HEK293 (cell line): ENCODE measurements at regions of chr6 and their contacts with region 1.

Region 1: GRCh38 chr6:135145063-135145800 is 35.9 kb upstream of the MYB start:
- H3K4me3 ChIP-seq: no peak overlapping the region
- H3K27ac ChIP-seq: no peak overlapping the region
- H3K4me1 ChIP-seq: no peaks in the 10 kb centered on the region
- CTCF ChIP-seq: no peak

Region 2: DNA sequence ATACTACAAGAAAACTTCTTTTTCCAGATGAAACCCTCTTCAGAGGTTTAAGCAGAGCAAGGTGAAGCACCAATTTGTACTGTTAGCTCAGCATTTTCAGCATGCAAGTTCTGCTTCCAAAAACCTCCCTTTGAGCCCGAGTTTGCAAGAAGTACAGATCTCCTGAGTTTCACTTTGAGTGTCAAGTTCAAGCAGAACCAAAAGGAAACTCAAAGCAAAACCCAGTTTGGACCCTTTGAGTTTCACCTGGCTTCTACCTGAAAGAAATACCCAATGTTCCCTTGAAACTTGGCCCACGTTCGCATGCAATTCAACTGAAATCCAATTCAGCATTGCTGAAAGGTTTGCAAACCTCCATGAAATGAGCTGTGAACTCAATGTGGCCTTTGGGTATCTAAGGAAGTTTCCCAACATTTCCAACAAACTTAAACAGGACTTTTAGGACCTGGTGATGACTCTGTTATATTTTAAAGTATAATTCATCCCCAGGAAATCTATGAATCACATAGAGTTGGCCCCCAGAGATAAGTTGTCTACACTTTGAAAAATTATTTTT is 27.7 kb before region 1 on chr6:
- CTCF ChIA-PET with region 1: interaction called, 10 read pairs
- POLR2A ChIA-PET with region 1: no interaction called
- H3K4me3 ChIP-seq: no peak overlapping the region
- H3K27ac ChIP-seq: no peak overlapping the region
- H3K4me1 ChIP-seq: no peaks in the 10 kb centered on the region
- CTCF ChIP-seq: no peak

Region 3: GRCh38 chr6:135162678-135163439 is 17.6 kb after region 1 on chr6:
- CTCF ChIA-PET with region 1: interaction called, 19 read pairs
- POLR2A ChIA-PET with region 1: no interaction called
- H3K4me3 ChIP-seq: no peak overlapping the region
- H3K27ac ChIP-seq: no peak overlapping the region
- H3K4me1 ChIP-seq: no peaks in the 10 kb centered on the region
- CTCF ChIP-seq: 0 out of 2 replicates have a peak, but pooled peaks have one; percentile 16

Region 4: GRCh38 chr6:135183532-135184440 is 38.6 kb after region 1 on chr6:
- CTCF ChIA-PET with region 1: interaction called, 33 read pairs
- POLR2A ChIA-PET with region 1: no interaction called
- H3K4me3 ChIP-seq: peak overlapping the region; percentile 61
- H3K27ac ChIP-seq: no peak overlapping the region
- H3K4me1 ChIP-seq: peaks cover 3% of the 10 kb centered on the region
- CTCF ChIP-seq: peak; percentile 30

Region 5: DNA sequence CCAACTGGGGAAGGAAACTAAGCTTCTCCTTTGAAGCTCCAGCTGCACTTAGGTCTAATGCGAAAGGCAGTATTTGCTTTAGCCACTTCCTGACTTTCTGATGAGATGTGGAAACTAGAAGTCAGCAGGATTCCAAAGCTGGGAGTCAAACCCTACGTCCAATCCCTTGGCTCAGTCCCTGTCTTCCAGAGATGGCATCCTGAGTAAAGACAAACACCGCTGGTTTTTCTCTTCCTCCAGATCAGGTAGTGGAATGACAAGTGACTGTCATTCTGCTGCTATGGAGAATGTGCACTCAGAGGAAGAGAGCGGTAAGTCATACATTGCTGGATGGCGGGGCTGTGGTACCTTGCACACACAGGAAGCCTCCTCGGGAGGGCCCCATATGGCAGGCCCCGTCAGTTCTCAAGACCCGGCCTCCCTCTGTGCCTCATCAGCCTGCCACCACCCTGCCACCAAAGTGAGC is 106.8 kb after region 1 on chr6:
- CTCF ChIA-PET with region 1: no interaction called
- POLR2A ChIA-PET with region 1: no interaction called
- H3K4me3 ChIP-seq: no peak overlapping the region
- H3K27ac ChIP-seq: no peak overlapping the region
- H3K4me1 ChIP-seq: no peaks in the 10 kb centered on the region
- CTCF ChIP-seq: no peak

Region 6: DNA sequence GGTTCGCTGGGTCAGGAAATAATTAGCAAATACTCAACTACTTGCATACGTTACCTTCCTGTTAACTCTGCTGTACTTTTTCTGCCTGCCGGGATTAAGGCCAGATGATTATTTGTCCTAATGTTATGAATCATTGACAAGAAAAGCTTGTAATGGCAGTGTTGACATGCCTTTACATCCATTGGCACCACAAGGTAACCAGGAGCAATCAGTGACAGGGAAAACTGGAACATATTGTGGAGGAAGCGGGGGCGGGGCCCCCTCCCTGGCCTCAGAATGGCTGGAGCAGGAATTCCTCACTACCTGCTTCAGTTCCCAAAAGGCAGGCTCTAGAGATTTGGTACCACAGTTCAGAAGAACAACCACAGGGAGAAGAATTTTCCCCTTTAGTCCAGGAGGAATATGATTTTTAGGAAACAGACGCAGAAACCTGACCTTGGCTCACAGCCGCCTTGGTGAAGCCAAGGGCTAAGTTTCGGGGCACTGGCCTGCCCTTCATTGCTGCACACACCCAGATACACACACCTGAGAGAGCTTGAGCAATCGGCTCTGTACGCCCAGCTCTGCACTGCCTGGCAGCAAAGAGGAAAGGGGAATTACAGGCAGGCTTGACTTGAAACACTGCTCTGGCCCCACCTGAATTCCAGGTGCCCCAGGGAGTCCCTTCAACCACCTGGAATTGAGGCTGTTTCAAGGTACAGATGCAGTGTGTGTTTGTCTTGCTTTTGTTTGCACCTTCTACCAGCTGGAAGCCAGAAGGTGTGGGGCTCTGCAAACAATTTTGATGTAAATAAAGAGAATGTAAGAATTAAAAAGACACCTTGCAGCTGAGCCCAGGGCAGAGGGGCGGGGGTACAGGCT is 125.7 kb after region 1 on chr6:
- CTCF ChIA-PET with region 1: no interaction called
- POLR2A ChIA-PET with region 1: no interaction called
- H3K4me3 ChIP-seq: no peak overlapping the region
- H3K27ac ChIP-seq: no peak overlapping the region
- H3K4me1 ChIP-seq: no peaks in the 10 kb centered on the region
- CTCF ChIP-seq: no peak

Region 7: GRCh38 chr6:135423649-135424128 is 278.5 kb after region 1 on chr6:
- CTCF ChIA-PET with region 1: interaction called, 65 read pairs
- POLR2A ChIA-PET with region 1: no interaction called
- H3K4me3 ChIP-seq: no peak overlapping the region
- H3K27ac ChIP-seq: no peak overlapping the region
- H3K4me1 ChIP-seq: no peaks in the 10 kb centered on the region
- CTCF ChIP-seq: no peak

Region 8: DNA sequence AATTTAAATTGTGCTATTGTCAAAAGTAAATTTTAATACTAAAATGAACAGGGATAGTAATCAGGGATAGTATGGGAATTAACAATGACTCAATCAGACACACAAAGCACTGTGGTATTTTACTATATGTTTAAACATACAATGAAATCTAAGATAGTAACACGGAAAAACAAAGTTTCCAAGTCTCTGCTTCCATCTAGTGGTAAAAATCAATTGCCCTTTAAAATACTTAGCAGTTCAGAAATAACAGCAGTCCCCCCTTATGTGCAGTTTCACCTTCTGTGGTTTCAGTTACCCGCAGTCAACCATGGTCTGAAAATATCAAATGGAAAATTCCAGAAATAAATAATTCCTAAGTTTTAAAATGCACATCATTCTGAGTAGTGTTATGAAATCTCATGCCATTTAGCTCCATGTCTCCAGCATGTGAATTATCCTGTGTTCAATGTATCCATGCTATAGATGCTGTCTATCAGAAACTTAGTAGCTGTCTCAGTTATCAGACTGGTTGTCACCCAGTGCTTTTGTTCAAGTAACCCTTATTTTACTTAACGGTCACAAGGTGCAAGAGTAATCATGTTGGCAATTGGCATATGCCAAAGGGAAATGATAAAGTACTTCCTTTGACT is 293.8 kb after region 1 on chr6:
- CTCF ChIA-PET with region 1: interaction called, 17 read pairs
- POLR2A ChIA-PET with region 1: no interaction called
- H3K4me3 ChIP-seq: no peak overlapping the region
- H3K27ac ChIP-seq: no peak overlapping the region
- H3K4me1 ChIP-seq: no peaks in the 10 kb centered on the region
- CTCF ChIP-seq: no peak